Left colon (tissue), 2 donors: ENCODE measurements at regions of chr3 and their contacts with region 1.

Region 1: GRCh38 chr3:187572441-187572840 is 97.8 kb downstream of the SST start:
- DNase-seq: no peak
- ATAC-seq: no peak

Region 2: DNA sequence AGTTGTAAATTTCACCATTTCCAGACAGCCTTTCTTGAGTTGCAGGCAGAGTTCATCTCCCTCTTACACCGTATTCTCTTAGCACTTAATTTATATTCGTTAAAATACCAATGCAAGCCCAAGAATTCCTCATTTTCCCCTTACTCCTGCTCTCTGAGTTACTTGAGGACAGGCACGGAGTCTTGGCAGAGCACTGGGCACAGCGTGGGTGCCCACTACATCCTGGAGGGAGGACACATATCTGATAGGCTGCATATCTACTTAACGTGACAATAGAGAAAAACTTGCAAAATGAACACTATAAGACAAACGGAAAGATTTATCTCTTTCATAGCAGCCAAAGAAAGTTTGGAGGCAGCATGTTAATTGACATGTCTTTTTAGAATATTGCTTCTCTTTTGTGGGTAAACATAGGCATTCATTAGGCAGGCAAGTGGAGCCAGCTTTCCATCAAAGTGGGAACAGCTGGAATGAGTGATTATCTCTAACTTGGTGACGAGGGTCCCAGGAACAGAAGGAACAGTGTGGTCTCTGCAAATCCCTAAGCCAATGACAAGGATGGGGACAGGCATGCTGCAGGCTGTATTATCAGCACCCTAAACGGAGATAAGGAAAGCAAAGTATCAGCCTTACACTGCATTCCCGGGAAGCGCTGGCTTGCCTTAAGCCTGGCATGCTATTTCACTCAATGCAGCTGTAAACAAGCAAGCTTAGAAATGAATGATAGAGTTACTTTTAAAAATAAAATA is 87.7 kb before region 1 on chr3:
- intact Hi-C with region 1: no loop called
- DNase-seq: no peak
- ATAC-seq: no peak

Region 3: DNA sequence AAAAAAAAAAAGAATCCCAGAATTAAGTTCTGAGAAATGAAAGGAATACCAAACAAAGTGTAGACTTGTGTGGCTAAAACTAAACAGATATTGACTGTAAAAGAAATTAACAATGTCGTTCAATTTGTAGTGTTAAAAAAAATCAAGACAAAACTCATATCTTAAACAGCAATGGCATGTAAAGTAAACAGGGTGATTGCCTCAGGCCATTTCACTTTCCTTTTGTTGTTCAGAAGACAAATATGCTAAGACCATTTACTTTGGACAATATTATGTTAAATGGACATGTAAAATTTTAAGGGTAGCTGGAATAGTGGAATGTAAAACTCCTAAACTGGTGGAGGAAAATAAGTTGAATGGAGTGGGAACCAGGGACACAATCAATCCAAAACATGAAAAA is 65.2 kb before region 1 on chr3:
- intact Hi-C with region 1: no loop called
- DNase-seq: no peak
- ATAC-seq: no peak

Region 4: GRCh38 chr3:187610981-187611511 is 38.6 kb after region 1 on chr3:
- intact Hi-C with region 1: loop called in 1 of 2 experiments (anchors 2 kb)
- DNase-seq: no peak
- ATAC-seq: no peak

Region 5: DNA sequence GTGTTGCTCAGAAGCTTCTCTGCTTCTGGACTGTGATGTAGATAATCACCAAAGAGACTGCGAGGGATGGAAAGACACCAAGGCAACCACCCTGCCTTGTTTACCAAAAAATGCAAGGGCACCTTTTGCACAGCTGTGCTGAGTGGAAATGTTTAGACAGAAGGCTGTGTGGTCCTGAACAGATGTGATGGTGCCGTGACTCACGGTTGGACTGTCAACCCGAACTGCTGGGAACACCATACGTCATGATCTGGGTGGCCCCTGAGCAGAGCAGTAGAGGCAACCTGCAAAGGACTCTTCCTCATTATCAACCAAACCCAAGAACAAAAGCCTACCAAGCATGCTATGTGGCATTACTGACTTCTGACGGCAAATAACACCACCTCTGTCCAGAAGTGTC is 520.2 kb after region 1 on chr3:
- intact Hi-C with region 1: no loop called
- DNase-seq: no peak
- ATAC-seq: no peak